Sciatic nerve (tissue), 2 donors: ENCODE measurements at regions of chr7 and their contacts with region 1.

Region 1: GRCh38 chr7:121175826-121176225 is 153.0 kb upstream of the WNT16 start:
- DNase-seq: no peak
- ATAC-seq: no peak

Region 2: DNA sequence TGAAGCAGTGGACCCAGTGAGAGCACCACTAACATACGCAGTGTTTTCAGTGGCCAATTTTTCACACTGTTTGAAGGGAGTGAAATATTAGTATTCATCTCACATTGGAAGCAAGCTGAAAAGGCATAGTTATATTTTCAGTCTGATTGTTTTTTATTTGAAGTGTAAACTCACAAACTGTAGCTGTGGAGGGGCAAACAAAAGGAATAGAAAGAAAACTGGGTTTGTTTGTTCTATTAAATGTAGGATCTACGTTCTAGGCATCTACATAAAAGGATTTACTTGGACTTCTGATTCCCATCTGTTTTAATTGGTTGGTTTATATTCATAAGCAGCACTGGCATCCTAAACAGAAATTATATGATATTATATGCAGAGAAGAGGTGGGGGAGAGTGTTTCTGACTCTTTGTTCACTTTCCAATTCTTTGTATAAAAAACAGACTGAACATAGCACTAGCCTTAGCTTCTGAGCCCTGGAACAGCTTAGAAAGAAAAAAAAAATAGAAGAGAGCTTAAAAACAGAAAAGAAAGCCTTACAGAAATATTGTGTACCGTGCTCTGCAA is 1350.7 kb before region 1 on chr7:
- intact Hi-C with region 1: no loop called
- DNase-seq: no peak
- ATAC-seq: no peak

Region 3: GRCh38 chr7:121138262-121138933 is 37.4 kb before region 1 on chr7:
- intact Hi-C with region 1: no loop called
- DNase-seq: no peak
- ATAC-seq: peak; percentile 34

Region 4: GRCh38 chr7:121205777-121206176 is 30.0 kb after region 1 on chr7:
- intact Hi-C with region 1: loop called (anchors 1 kb)
- DNase-seq: no peak
- ATAC-seq: no peak

Region 5: GRCh38 chr7:122577449-122578003 is 1401.7 kb after region 1 on chr7:
- intact Hi-C with region 1: no loop called
- DNase-seq: no peak
- ATAC-seq: no peak